Dorsolateral prefrontal cortex (tissue), 120 donors: ENCODE measurements at regions of chr10 and their contacts with region 1.

Region 1: DNA sequence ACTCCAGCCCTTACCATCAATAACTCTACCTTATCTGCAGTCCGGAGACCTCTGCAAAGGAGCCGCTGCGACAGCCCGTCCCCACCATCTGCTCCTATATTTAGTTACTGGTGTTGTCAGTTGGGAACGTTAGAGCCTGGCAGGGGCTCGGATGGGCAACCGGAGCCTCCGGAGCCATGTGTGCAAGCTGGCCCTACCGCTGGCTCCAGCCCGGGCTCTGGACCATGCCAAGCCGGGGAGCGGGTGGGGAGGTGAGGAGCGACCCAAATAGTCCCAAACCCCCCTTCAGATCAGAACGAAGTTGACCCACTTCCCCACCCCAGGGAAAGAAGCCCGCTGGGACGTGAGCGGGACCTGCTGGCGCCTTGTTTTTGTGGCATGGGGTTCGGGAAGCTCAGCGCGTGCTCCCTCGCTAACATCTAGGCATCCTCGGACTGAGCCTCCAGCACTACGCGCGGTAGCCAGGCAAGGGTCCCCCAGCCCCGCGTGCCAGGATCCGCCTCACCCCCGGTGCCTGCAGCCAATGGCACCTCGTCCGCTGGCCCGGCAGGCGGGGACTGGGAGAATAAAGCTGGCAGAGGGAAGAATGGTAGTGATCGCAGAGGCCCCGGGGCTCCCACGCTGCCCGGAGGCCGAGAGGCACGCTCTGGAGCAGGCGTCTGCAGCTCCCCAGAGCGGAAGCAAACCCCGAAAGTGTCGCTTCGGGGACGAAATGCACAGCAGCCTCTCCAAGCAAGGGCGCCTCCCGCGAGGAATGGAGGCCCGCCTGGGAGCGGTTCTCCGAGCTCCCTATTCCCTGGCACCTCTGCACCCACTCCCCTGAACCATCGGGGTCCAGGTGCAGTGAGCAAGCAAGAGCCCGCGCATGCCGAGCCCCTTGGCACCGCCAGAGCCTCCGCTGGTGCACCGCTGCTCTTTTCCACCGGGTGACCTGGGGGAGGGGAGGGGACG is 679 bp downstream of the LRRC20 start:
- DNase-seq: peak in 9 of 10 donors; percentile 30 to 75 (median 51)
- H3K4me3 ChIP-seq: peak overlapping the region; percentile 44 to 99 (median 87)
- H3K27ac ChIP-seq: peak overlapping the region in 52 of 59 donors; percentile 2 to 89 (median 73)
- H3K27me3 ChIP-seq: no peaks in the 10 kb centered on the region
- CTCF ChIP-seq: peak in 2 of 56 donors; percentile 2 to 7

Region 2: GRCh38 chr10:70169649-70170364 is 211.9 kb before region 1 on chr10:
- intact Hi-C with region 1: loop called in 1 of 2 experiments (anchors 5 kb)
- DNase-seq: peak in 2 of 10 donors; percentile 40 to 50
- H3K4me3 ChIP-seq: peak overlapping the region; percentile 68 to 98 (median 93)
- H3K27ac ChIP-seq: peak overlapping the region in 58 of 59 donors; percentile 51 to 96 (median 87)
- H3K27me3 ChIP-seq: no peaks in the 10 kb centered on the region
- CTCF ChIP-seq: no peak

Region 3: DNA sequence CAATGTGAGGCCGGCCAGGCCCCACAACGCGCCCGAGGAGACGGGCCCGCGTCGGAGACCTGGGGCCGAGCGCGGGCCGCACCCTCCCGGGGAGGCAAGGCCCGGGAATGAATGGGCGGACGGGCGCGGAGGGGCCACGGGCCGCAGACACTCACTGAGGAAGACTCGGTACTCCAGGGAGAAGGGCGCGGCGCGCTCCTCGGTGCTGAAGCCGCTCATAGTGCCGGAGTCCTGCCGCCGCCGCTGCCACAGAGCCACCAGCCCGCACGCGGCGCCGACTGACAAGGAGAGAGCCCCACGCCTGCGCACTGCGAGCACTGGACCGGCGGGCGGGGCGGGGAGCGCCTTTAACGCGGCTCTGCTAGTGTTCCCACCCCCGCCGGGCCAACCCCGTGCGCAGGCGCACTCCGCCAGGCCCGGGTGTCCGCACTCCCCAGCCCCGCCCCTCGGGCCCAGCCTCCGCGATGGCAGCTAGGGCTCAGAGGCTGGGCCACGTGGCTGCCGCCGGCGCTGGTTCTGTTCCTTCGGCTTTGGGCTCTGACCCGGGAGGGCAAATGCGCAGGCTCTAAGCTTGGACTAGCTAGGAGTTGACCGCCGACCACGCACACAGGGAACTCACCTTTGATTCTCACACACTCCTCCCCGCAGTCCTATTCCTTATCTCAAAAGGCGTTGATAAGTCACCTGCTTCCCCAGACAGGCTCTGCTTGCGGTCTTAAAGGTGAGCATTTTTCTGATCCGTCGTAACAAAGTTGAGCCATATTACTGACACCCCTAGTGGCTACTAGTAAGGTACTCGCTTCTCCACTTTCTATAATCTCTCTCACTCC is 148.4 kb before region 1 on chr10 and contains the start of gene PPA1:
- intact Hi-C with region 1: loop called in 1 of 2 experiments (anchors 5 kb)
- DNase-seq: peak; percentile 98 to 100 (median 99)
- H3K4me3 ChIP-seq: peak within 1 kb of the TSS; percentile 64 to 100 (median 93)
- H3K27ac ChIP-seq: peak within 1 kb of the TSS; percentile 42 to 91 (median 81)
- H3K27me3 ChIP-seq: no peaks in the 10 kb centered on the region
- CTCF ChIP-seq: peak in 38 of 56 donors; percentile 3 to 66 (median 36)
- total RNA-seq, gene PPA1: 63.3 to 219 (median 163) TPM